MCF 10A (cell line): ENCODE measurements at regions of chr6 and their contacts with region 1.

Region 1: DNA sequence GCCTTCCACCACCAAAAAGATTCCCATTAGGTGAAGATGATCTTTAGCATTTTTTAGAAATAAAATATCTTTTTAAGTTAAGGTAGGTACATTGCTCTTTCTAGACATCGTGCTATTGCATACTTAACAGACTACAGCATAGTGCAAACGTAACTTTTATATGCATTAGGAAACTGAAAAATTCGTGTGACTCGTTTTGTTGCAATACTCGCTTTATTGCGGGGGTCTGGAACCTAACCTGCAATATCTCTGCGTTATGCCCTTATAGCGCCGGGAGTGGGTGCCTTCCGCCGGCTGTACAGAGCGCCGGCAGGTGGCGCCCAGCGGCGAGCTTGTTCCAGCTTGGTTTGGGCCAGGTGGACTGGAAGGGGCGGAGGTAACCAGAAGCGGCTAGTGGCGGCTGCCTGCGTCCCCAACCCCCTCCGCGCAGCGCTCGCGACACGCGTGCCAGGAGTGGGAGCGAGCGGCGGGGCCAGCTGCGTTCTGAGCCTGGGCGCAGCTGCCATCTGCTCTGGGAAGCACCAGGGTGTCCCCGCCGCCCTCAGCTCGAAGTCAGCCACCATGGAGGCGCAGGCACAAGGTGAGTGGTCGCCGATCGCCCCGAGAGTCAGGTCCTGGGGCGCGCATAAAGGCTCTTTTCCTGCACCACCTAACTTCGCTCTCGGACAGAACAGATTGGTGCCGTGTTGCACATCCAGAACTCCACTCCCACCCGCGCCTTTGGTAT is at the start of gene TPD52L1:
- DNase-seq: peak; percentile 83
- H3K4me3 Mint-ChIP-seq: peak within 1 kb of the TSS; percentile 83
- H3K27ac Mint-ChIP-seq: peak within 1 kb of the TSS; percentile 55
- H3K4me1 Mint-ChIP-seq: peaks cover 23% of the 10 kb centered on the region
- H3K27me3 Mint-ChIP-seq: no peaks in the 10 kb centered on the region
- CTCF ChIP-seq: peak; percentile 73
- total RNA-seq, gene TPD52L1: 69.5 and 92.6 TPM in 2 replicates

Region 2: DNA sequence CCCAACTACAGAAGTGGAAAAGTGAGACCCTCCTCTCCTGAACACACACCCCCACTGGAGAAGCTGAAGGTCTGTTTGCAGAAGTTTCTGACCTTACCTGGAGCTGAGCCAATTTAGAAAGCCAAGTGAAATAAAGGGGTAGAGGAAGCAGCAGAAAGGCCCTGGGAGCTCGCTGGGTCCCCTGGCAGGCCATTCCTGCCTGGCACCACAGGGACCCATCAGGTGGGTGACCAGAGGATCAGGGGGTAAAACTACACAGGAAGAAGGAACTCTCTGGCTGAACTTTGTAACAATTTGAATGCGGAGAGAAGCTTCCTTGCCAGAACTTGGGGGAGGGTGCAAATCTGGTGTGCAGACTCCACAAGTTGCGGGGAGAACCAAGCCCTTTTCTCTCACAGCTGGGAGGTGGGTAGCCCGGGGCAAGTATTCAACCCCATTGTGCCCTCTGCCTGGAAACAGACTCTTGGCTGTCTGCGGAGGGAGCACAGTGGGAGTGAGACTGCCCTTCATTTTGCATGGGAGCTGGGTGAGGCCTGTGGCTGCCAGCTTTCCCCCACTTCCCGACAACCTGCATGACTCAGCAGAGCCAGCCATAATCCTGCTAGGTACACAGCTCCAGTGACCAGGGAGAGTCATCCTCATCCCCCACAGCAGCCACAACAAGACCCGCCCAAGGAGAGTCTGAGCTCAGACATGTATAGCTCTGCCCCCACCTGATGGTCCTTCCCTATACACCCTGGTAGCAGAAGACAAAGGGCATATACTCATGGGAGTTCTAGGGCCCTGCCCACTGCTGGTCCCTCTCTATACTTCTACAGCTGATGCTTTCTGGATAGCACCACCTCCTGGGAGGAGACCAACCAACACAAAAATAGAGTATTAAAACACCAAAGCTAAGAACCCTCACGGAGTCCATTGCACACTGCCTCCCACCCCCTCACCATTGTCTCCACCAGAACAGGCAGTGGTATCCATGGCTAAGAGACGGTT is 29.5 kb before region 1 on chr6:
- CTCF ChIA-PET with region 1: interaction called, 13 read pairs
- POLR2A ChIA-PET with region 1: interaction called, 13 read pairs
- intact Hi-C with region 1: no loop called
- DNase-seq: peak; percentile 96
- H3K4me3 Mint-ChIP-seq: peak overlapping the region; percentile 42
- H3K27ac Mint-ChIP-seq: peak overlapping the region; percentile 76
- H3K4me1 Mint-ChIP-seq: peaks cover 17% of the 10 kb centered on the region
- H3K27me3 Mint-ChIP-seq: no peaks in the 10 kb centered on the region
- CTCF ChIP-seq: no peak

Region 3: GRCh38 chr6:125170376-125170775 is 16.8 kb after region 1 on chr6:
- CTCF ChIA-PET with region 1: interaction called, 25 read pairs
- POLR2A ChIA-PET with region 1: interaction called, 8 read pairs
- intact Hi-C with region 1: no loop called
- DNase-seq: peak; percentile 85
- H3K4me3 Mint-ChIP-seq: no peak overlapping the region
- H3K27ac Mint-ChIP-seq: peak overlapping the region; percentile 47
- H3K4me1 Mint-ChIP-seq: peaks cover 23% of the 10 kb centered on the region
- H3K27me3 Mint-ChIP-seq: no peaks in the 10 kb centered on the region
- CTCF ChIP-seq: no peak

Region 4: DNA sequence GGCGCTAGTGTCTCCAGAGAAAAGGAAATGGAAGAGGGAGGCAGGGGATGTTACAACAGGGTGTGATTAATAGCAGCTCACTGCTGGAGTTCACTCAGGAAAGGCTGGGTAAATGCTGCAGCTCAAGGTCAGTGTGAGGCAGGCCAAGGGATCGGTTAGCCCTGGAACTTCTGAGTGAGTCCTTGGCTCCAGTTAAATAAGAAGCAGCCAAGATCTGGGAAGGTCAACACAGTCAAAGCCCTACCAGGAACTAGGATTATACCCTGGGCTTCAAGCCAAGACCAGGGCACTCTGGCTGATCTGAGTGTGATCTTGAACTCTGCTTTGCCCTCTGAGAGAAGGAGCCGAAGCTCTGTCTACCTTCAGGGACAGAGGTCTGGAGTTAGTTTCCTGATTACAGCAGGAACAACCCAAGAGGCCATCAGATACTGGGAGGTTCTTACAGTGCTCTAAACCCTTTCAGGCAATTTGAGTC is 44.3 kb after region 1 on chr6:
- CTCF ChIA-PET with region 1: interaction called, 70 read pairs
- POLR2A ChIA-PET with region 1: interaction called, 10 read pairs
- intact Hi-C with region 1: loop called (anchors 2 kb)
- DNase-seq: peak; percentile 98
- H3K4me3 Mint-ChIP-seq: no peak overlapping the region
- H3K27ac Mint-ChIP-seq: peak overlapping the region; percentile 82
- H3K4me1 Mint-ChIP-seq: peaks cover 62% of the 10 kb centered on the region
- H3K27me3 Mint-ChIP-seq: no peaks in the 10 kb centered on the region
- CTCF ChIP-seq: no peak

Region 5: DNA sequence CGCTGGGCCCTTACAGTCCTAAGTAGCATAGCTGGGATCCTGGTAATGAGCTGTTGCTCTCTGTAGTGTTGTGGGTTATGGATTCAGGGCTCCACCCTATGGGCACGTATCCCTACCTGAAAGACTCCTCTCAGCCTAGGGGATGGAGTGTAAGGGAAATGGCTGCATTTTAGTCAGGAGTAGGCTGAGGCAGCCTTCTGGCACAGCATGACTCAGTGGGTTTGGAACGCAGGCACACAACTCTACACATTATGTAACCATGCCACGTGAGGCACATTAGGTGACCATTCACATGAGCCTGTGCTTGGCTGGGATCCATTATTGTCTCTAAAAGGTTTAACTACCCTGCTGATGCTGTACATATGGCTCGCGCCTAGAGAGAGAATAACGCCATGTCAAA is 120.4 kb after region 1 on chr6:
- CTCF ChIA-PET with region 1: interaction called, 15 read pairs
- POLR2A ChIA-PET with region 1: interaction called, 5 read pairs
- intact Hi-C with region 1: loop called (anchors 1 kb)
- DNase-seq: peak; percentile 99
- H3K4me3 Mint-ChIP-seq: peak overlapping the region; percentile 18
- H3K27ac Mint-ChIP-seq: peak overlapping the region; percentile 79
- H3K4me1 Mint-ChIP-seq: peaks cover 30% of the 10 kb centered on the region
- H3K27me3 Mint-ChIP-seq: no peaks in the 10 kb centered on the region
- CTCF ChIP-seq: no peak

Region 6: DNA sequence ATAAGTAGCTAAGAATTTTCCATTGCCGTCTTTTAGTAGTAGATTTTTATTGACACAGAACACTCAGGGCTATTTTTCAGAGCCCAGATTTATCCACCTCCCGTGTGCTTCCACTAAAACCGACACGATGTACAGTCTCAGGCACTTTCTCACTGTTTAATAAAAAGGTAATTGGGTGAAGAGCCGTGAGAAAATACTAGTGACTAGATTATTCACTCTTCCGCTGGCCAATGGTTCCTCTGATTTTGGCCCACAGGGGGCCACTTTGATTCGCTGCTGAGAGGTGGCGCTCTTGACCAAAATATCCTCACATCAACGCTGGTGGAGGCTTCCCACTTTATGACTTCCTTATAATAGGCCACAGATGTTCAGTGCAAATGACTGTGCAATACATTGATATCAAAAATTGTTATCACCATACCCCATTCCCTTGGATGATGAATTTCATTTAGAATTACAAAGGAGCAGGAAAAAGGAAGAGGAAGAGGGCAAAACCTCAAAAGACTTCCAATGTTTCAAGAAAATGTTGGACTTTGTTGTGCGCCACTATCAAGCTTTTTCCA is 160.5 kb after region 1 on chr6:
- CTCF ChIA-PET with region 1: interaction called, 12 read pairs
- POLR2A ChIA-PET with region 1: no interaction called
- intact Hi-C with region 1: loop called (anchors 1 kb)
- DNase-seq: peak; percentile 73
- H3K4me3 Mint-ChIP-seq: no peak overlapping the region
- H3K27ac Mint-ChIP-seq: no peak overlapping the region
- H3K4me1 Mint-ChIP-seq: no peaks in the 10 kb centered on the region
- H3K27me3 Mint-ChIP-seq: peaks cover 12% of the 10 kb centered on the region
- CTCF ChIP-seq: peak; percentile 79

Region 7: DNA sequence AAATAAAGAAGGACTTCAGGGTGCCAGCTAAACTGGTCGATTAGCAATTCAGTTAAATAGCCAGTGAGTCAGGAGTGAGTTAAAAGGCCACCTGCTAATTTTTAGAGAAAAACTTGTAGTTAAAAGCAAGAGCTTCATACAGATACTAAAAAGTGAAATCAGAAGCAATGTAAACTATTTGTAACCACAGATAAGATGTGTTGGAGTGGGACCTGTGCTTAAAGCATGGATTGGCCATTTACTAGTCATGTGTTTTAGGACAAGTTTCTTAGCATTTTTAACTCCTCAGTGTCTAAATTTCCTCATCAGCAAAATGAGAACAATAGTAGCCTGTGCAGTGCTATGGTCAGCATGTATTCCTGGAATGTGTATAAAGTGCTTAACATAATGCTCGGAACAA is 172.0 kb after region 1 on chr6:
- CTCF ChIA-PET with region 1: no interaction called
- POLR2A ChIA-PET with region 1: no interaction called
- intact Hi-C with region 1: no loop called
- DNase-seq: no peak
- H3K4me3 Mint-ChIP-seq: no peak overlapping the region
- H3K27ac Mint-ChIP-seq: no peak overlapping the region
- H3K4me1 Mint-ChIP-seq: no peaks in the 10 kb centered on the region
- H3K27me3 Mint-ChIP-seq: peaks cover 63% of the 10 kb centered on the region
- CTCF ChIP-seq: no peak